GM12878 (cell line): ENCODE measurements at regions of chr1 and their contacts with region 1.

Region 1: GRCh38 chr1:109548321-109549267 is at the start of gene GNAI3:
- DNase-seq: peak; percentile 85
- ATAC-seq: peak; percentile 95
- H3K4me3 ChIP-seq: peak within 1 kb of the TSS; percentile 92
- H3K27ac ChIP-seq: peak within 1 kb of the TSS; percentile 96
- H3K4me1 ChIP-seq: peaks cover 6% of the 10 kb centered on the region
- H3K27me3 ChIP-seq: no peaks in the 10 kb centered on the region
- CTCF ChIP-seq: no peak
- EP300 ChIP-seq: peak; percentile 13 to 61; a peak in 3 of 4 replicates
- POLR2A ChIP-seq: peak; percentile 99
- RAD21 ChIP-seq: no peak
- polyA plus RNA-seq, gene GNAI3: 6.2 TPM

Region 2: GRCh38 chr1:109559995-109560394 is 11.4 kb after region 1 on chr1:
- CTCF ChIA-PET with region 1: interaction called, 20 read pairs
- POLR2A ChIA-PET with region 1: interaction called, 17 read pairs
- RAD21 ChIA-PET with region 1: interaction called, 17 read pairs
- SMC1A ChIA-PET with region 1: interaction called, 27 read pairs
- in situ Hi-C with region 1: no loop called
- intact Hi-C with region 1: no loop called
- DNase-seq: no peak
- ATAC-seq: no peak
- H3K4me3 ChIP-seq: no peak overlapping the region
- H3K27ac ChIP-seq: no peak overlapping the region
- H3K4me1 ChIP-seq: peaks cover 4% of the 10 kb centered on the region; the same call in 1 of the 2 replicates
- H3K27me3 ChIP-seq: no peaks in the 10 kb centered on the region
- CTCF ChIP-seq: no peak
- EP300 ChIP-seq: no peak
- POLR2A ChIP-seq: no peak
- RAD21 ChIP-seq: no peak

Region 3: DNA sequence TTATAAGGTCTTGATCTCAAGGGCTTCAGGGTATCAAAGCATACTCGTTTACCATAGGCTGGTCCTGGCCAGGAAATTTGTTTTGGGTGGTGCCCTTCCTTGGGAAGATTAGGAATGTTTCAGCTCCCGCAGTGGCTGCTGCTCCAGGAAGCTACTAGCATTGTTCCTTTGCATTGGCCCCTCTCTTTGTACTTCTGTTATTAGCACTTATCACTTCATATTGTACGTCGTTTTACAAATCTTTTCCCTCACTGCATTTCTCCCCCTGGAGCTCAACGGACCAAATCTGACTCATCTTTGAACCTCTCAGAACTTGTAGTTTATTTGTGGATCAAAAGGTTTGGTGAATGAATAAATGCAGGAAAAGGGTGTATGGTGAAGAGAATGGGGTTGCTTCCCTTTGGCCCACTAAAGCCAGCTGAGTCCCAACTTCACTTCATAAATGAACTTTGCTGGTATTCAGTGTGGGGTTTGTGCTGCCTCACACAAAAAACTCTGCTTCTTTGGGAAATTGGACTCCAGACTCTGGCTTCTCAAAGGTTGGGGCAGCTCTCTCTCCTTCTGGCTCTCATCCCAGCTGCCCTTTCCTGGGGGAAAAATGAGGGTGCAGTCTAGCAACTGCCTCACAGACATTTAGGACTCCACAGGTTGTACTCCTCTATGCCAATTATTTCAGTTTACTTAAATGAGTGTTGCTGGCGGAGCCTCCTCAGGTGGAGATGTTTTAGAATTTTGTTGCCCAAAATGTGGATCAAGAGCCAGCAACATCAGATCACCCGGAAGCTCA is 65.0 kb after region 1 on chr1:
- CTCF ChIA-PET with region 1: interaction called, 20 read pairs
- POLR2A ChIA-PET with region 1: interaction called, 34 read pairs
- RAD21 ChIA-PET with region 1: interaction called, 10 read pairs
- SMC1A ChIA-PET with region 1: interaction called, 13 read pairs
- in situ Hi-C with region 1: no loop called
- intact Hi-C with region 1: no loop called
- DNase-seq: no peak
- ATAC-seq: no peak
- H3K4me3 ChIP-seq: no peak overlapping the region
- H3K27ac ChIP-seq: no peak overlapping the region
- H3K4me1 ChIP-seq: peaks cover 6% of the 10 kb centered on the region; the same call in 1 of the 2 replicates
- H3K27me3 ChIP-seq: no peaks in the 10 kb centered on the region
- CTCF ChIP-seq: no peak
- EP300 ChIP-seq: no peak
- POLR2A ChIP-seq: no peak
- RAD21 ChIP-seq: no peak

Region 4: DNA sequence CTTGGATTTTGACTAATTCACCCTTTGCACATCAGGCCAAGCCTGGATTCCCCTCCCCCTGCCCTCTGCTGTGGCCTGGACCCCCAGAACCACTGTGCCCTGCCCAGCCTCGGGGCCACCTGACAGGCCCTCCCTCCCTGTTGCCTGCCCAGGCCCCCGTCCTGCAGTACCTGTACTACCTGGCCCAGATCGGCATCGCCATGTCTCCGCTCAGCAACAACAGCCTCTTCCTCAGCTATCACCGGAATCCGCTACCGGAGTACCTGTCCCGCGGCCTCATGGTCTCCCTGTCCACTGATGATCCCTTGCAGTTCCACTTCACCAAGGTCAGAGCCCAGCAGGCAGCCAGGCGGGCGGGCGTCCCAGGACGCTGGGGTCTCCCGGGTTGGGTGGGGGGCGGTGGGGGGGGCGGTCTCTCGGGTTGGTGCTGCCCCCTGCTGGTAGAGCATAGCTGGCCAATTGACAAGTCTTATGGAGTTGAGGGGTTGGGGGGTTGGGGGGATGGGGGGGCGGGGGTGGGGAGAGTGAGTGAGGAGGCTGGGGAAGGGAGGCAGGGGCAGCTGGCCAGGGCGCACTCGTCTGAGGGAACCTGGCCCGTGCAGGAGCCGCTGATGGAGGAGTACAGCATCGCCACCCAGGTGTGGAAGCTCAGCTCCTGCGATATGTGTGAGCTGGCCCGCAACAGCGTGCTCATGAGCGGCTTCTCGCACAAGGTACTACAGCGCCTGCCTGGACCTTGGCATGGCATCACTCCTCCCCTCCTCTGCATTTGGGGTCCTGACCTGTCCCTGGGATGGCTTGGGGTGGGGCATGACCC is 81.7 kb after region 1 on chr1:
- CTCF ChIA-PET with region 1: interaction called, 201 read pairs
- POLR2A ChIA-PET with region 1: interaction called, 14 read pairs
- RAD21 ChIA-PET with region 1: interaction called, 106 read pairs
- SMC1A ChIA-PET with region 1: interaction called, 117 read pairs
- in situ Hi-C with region 1: no loop called
- intact Hi-C with region 1: no loop called
- DNase-seq: no peak
- ATAC-seq: peak; percentile 14; the same call in 1 of the 3 replicates
- H3K4me3 ChIP-seq: no peak overlapping the region
- H3K27ac ChIP-seq: no peak overlapping the region
- H3K4me1 ChIP-seq: peaks cover 12% of the 10 kb centered on the region
- H3K27me3 ChIP-seq: no peaks in the 10 kb centered on the region
- CTCF ChIP-seq: peak; percentile 7 to 33 (median 11); a peak in 3 of 6 replicates
- EP300 ChIP-seq: no peak
- POLR2A ChIP-seq: no peak; the same call in 1 of the 2 replicates
- RAD21 ChIP-seq: peak; percentile 31; the same call in 1 of the 2 replicates

Region 5: DNA sequence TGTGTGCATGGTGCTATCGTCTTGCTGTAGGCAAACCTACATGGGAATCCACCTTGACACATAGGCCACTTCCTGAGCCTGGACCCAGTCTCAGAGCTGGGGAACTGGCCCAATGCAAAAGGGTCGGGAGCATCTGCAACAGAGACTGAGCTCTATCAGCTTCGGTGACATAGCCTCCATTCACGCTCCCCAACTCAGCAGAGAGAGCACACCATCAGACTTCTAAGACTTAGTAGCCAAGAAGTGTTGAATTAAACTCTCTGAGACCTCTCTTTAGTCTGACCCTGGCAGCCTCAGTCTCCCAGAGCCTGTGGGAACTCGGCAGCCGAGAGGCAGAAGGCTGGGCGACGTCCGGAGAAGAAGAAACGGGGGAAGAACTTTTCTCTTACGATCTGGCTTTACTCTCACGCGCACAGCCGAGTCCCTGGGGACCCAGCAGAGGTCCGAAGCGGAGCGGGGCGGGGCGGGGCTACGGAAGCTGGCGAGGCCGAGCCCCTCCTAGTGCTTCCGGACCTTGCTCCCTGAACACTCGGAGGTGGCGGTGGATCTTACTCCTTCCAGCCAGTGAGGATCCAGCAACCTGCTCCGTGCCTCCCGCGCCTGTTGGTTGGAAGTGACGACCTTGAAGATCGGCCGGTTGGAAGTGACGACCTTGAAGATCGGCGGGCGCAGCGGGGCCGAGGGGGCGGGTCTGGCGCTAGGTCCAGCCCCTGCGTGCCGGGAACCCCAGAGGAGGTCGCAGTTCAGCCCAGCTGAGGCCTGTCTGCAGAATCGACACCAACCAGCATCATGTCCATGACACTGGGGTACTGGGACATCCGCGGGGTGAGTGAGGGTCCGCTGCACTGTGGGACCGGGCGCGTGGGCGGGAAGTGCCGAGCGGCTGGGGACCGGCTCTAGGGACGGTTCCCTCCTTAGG is 107.3 kb after region 1 on chr1 and contains the start of gene GSTM4:
- CTCF ChIA-PET with region 1: interaction called, 27 read pairs
- POLR2A ChIA-PET with region 1: interaction called, 9 read pairs
- RAD21 ChIA-PET with region 1: interaction called, 10 read pairs
- SMC1A ChIA-PET with region 1: interaction called, 24 read pairs
- in situ Hi-C with region 1: no loop called
- intact Hi-C with region 1: no loop called
- DNase-seq: peak; percentile 47
- ATAC-seq: peak; percentile 95
- H3K4me3 ChIP-seq: peak within 1 kb of the TSS; percentile 75
- H3K27ac ChIP-seq: peak within 1 kb of the TSS; percentile 60
- H3K4me1 ChIP-seq: 0 out of 2 replicates have a peak, but pooled peaks cover 4% of the 10 kb centered on the region
- H3K27me3 ChIP-seq: no peaks in the 10 kb centered on the region
- CTCF ChIP-seq: no peak
- EP300 ChIP-seq: no peak
- POLR2A ChIP-seq: peak; percentile 77
- RAD21 ChIP-seq: no peak
- polyA plus RNA-seq, gene GSTM4: 16.9 to 17.0 TPM